CD4-positive, alpha-beta memory T cell (primary cell): ENCODE measurements at regions of chr5 and their contacts with region 1.

Region 1: GRCh38 chr5:141968914-141969608 is at the start of gene RNF14:
- DNase-seq: peak; percentile 92 to 94 (median 93)
- H3K4me3 ChIP-seq: peak within 1 kb of the TSS; percentile 66 to 85
- H3K4me3 Mint-ChIP-seq: peak within 1 kb of the TSS; percentile 87 to 98 (median 94)
- H3K27ac ChIP-seq: peak within 1 kb of the TSS; percentile 96
- H3K27ac Mint-ChIP-seq: peak within 1 kb of the TSS; percentile 97 to 99 (median 98)
- H3K4me1 ChIP-seq: peaks cover 23% of the 10 kb centered on the region
- H3K4me1 Mint-ChIP-seq: peaks cover 20 to 42% (median 30%) of the 10 kb centered on the region in 4 donors
- H3K27me3 ChIP-seq: no peaks in the 10 kb centered on the region
- H3K27me3 Mint-ChIP-seq: no peaks in the 10 kb centered on the region
- total RNA-seq, gene RNF14: 35.4 to 38.5 TPM

Region 2: GRCh38 chr5:141636413-141637122 is 332.5 kb before region 1 on chr5 and contains the starts of genes HDAC3 and RELL2:
- CTCF ChIA-PET with region 1: interaction called, 6 read pairs
- POLR2A ChIA-PET with region 1: interaction called, 12 read pairs
- intact Hi-C with region 1: no loop called
- DNase-seq: peak; percentile 89 to 95 (median 93)
- H3K4me3 ChIP-seq: peak within 1 kb of the TSS; percentile 86 to 98
- H3K4me3 Mint-ChIP-seq: peak within 1 kb of the TSS; percentile 88 to 96 (median 94)
- H3K27ac ChIP-seq: peak within 1 kb of the TSS; percentile 87
- H3K27ac Mint-ChIP-seq: peak within 1 kb of the TSS; percentile 90 to 98 (median 96)
- H3K4me1 ChIP-seq: peaks cover 50% of the 10 kb centered on the region
- H3K4me1 Mint-ChIP-seq: peaks cover 31 to 51% (median 39%) of the 10 kb centered on the region in 4 donors
- H3K27me3 ChIP-seq: no peaks in the 10 kb centered on the region
- H3K27me3 Mint-ChIP-seq: no peaks in the 10 kb centered on the region
- total RNA-seq, gene HDAC3: 85.1 to 91.0 TPM
- total RNA-seq, gene RELL2: 20.4 to 21.3 TPM

Region 3: GRCh38 chr5:141681695-141682641 is 287.1 kb before region 1 on chr5 and contains the start of gene ARAP3:
- CTCF ChIA-PET with region 1: interaction called, 4 read pairs
- POLR2A ChIA-PET with region 1: interaction called, 18 read pairs
- intact Hi-C with region 1: no loop called
- DNase-seq: peak in 2 of 5 donors; percentile 24 to 47
- H3K4me3 ChIP-seq: peak within 1 kb of the TSS in 1 of 2 donors; percentile 17
- H3K4me3 Mint-ChIP-seq: peak within 1 kb of the TSS; percentile 78 to 86 (median 83)
- H3K27ac ChIP-seq: no peak within 1 kb of the TSS
- H3K27ac Mint-ChIP-seq: peak within 1 kb of the TSS; percentile 47 to 91 (median 77)
- H3K4me1 ChIP-seq: peaks cover 33% of the 10 kb centered on the region
- H3K4me1 Mint-ChIP-seq: peaks cover 14 to 36% (median 26%) of the 10 kb centered on the region in 4 donors
- H3K27me3 ChIP-seq: no peaks in the 10 kb centered on the region
- H3K27me3 Mint-ChIP-seq: peaks cover 0 to 2% of the 10 kb centered on the region in 2 donors
- total RNA-seq, gene ARAP3: 14.7 to 16.4 TPM

Region 4: DNA sequence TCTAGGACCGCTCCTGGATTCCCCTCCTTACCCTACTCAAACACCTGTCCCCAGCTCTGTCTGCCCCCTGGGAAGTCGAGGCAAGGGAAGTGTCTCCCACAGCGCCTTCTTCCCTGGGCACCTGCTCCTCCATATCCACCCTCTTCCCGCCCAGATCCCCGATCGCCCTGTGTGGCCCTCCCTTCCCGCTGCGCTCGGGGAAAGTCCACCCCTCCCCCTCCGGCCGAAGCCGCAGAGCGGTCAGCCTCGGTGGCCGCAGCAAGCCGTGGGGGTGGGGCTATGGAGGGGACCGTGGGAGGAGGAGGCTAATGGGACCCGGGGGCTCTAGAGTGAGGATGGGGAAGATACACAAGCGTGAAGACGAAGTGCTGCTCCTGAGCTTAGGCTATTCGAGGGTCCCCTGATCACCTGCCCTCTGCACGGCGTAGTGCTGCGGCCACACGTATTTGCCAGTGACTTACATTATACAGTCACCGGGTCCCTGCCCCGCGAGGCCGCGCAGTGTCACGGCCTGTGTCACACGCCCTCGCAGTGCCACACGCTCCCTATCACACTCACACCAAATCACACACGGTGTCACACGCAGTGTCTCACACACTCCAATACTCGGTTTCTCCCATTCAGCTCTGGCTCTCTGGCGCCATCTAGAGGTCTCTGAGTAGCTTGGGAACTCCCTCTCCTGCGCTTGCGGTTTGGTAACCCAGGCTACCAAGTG is 90.2 kb before region 1 on chr5:
- CTCF ChIA-PET with region 1: interaction called, 10 read pairs
- POLR2A ChIA-PET with region 1: interaction called, 18 read pairs
- intact Hi-C with region 1: no loop called
- DNase-seq: peak; percentile 88 to 93 (median 90)
- H3K4me3 ChIP-seq: peak overlapping the region; percentile 53 to 76
- H3K4me3 Mint-ChIP-seq: peak overlapping the region; percentile 78 to 92 (median 86)
- H3K27ac ChIP-seq: no peak overlapping the region
- H3K27ac Mint-ChIP-seq: peak overlapping the region; percentile 31 to 88 (median 62)
- H3K4me1 ChIP-seq: peaks cover 40% of the 10 kb centered on the region
- H3K4me1 Mint-ChIP-seq: peaks cover 20 to 49% (median 28%) of the 10 kb centered on the region in 4 donors
- H3K27me3 ChIP-seq: peaks cover 60% of the 10 kb centered on the region
- H3K27me3 Mint-ChIP-seq: peaks cover 54 to 63% of the 10 kb centered on the region in 2 donors

Region 5: DNA sequence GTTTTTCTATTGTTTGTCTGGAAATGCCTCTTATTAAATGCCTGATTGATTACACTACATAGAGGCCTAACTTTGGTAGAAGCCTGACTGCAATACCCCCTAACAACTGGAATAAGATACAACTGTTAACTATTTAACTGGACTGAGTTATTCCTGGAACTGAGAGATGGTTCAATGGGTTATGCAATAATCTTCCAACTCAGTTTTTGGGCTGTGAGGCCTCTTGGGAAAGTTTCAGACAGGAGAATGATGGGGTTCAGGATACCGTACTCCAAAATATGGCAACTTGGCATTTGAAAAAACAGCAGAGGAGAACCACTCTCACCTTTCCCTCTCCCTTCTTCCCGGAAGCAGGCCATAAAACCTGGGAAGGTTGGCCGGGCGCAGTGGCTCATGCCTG is 71.6 kb before region 1 on chr5:
- CTCF ChIA-PET with region 1: no interaction called
- POLR2A ChIA-PET with region 1: no interaction called
- intact Hi-C with region 1: no loop called
- DNase-seq: no peak
- H3K4me3 ChIP-seq: no peak overlapping the region
- H3K4me3 Mint-ChIP-seq: no peak overlapping the region
- H3K27ac ChIP-seq: no peak overlapping the region
- H3K27ac Mint-ChIP-seq: no peak overlapping the region
- H3K4me1 ChIP-seq: no peaks in the 10 kb centered on the region
- H3K4me1 Mint-ChIP-seq: no peaks in the 10 kb centered on the region
- H3K27me3 ChIP-seq: no peaks in the 10 kb centered on the region
- H3K27me3 Mint-ChIP-seq: peaks cover 4 to 18% of the 10 kb centered on the region in 2 donors

Region 6: GRCh38 chr5:141992349-141992963 is 23.4 kb after region 1 on chr5:
- CTCF ChIA-PET with region 1: interaction called, 39 read pairs
- POLR2A ChIA-PET with region 1: interaction called, 4 read pairs
- intact Hi-C with region 1: no loop called
- DNase-seq: peak; percentile 67 to 74 (median 70)
- H3K4me3 ChIP-seq: no peak overlapping the region
- H3K4me3 Mint-ChIP-seq: no peak overlapping the region
- H3K27ac ChIP-seq: no peak overlapping the region
- H3K27ac Mint-ChIP-seq: peak overlapping the region in 3 of 7 donors; percentile 9 to 71 (median 60)
- H3K4me1 ChIP-seq: no peaks in the 10 kb centered on the region
- H3K4me1 Mint-ChIP-seq: peaks cover 3 to 7% (median 4%) of the 10 kb centered on the region in 4 donors
- H3K27me3 ChIP-seq: no peaks in the 10 kb centered on the region
- H3K27me3 Mint-ChIP-seq: no peaks in the 10 kb centered on the region

Region 7: DNA sequence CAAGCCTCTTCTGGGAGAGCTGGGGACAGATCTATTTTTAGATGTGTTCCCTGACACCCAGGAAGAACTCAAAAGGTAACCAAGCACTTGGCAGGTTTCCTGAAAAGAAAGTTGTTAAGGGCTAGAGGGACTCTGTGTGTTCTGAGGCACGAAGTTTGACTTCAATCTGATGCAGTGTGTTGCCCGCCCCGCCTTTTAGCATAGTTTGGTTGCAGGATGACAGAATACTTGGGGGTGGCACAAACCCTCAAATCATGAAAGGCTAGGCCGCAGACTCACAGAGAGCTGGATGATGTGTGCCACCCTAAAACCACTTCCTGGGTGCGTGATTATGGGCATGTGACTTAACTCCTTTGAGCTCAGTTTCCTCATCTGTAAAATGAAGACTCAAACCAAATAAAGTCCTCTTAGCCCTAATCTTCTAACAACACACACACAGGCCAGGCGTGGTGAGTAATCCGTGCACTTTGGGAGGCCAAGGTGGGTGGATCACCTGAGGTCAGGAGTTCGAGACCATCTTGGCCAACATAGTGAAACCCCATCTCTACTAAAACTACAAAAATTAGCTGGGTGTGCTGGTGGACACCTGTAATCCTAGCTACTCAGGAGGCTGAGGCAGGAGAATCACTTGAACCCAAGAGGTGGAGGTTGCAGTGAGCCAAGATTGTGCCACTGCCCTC is 126.7 kb after region 1 on chr5:
- CTCF ChIA-PET with region 1: interaction called, 6 read pairs
- POLR2A ChIA-PET with region 1: interaction called, 16 read pairs
- intact Hi-C with region 1: no loop called
- DNase-seq: peak; percentile 85 to 93 (median 91)
- H3K4me3 ChIP-seq: peak overlapping the region in 1 of 2 donors; percentile 27
- H3K4me3 Mint-ChIP-seq: peak overlapping the region; percentile 37 to 73 (median 57)
- H3K27ac ChIP-seq: peak overlapping the region; percentile 84
- H3K27ac Mint-ChIP-seq: peak overlapping the region; percentile 92 to 98 (median 96)
- H3K4me1 ChIP-seq: peaks cover 48% of the 10 kb centered on the region
- H3K4me1 Mint-ChIP-seq: peaks cover 31 to 51% (median 36%) of the 10 kb centered on the region in 4 donors
- H3K27me3 ChIP-seq: no peaks in the 10 kb centered on the region
- H3K27me3 Mint-ChIP-seq: no peaks in the 10 kb centered on the region

Region 8: GRCh38 chr5:142201471-142201887 is 232.4 kb after region 1 on chr5:
- CTCF ChIA-PET with region 1: no interaction called
- POLR2A ChIA-PET with region 1: no interaction called
- intact Hi-C with region 1: no loop called
- DNase-seq: no peak
- H3K4me3 ChIP-seq: no peak overlapping the region
- H3K4me3 Mint-ChIP-seq: no peak overlapping the region
- H3K27ac ChIP-seq: no peak overlapping the region
- H3K27ac Mint-ChIP-seq: no peak overlapping the region
- H3K4me1 ChIP-seq: no peaks in the 10 kb centered on the region
- H3K4me1 Mint-ChIP-seq: no peaks in the 10 kb centered on the region
- H3K27me3 ChIP-seq: no peaks in the 10 kb centered on the region
- H3K27me3 Mint-ChIP-seq: peaks cover 0 to 1% of the 10 kb centered on the region in 2 donors

Region 9: DNA sequence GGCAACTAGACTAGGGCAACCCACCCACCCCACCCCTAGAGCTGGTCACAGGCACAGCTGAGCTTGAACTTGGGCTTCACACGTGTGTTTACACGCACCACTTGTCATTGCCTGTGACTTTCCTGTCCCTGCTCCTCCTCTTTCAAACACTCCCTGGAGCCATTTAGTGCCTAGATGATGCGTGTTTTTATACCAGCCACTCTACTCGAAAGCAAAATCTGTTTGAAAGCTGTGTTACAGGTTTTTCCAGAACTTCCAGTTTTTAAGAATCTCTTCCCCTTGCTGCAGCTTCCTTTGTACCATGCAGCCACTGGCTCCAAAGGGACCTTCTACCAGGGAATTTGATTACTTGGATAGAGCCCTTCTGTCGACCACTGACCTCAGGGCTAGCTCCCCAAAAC is 434.5 kb after region 1 on chr5:
- CTCF ChIA-PET with region 1: no interaction called
- POLR2A ChIA-PET with region 1: no interaction called
- intact Hi-C with region 1: no loop called
- DNase-seq: no peak
- H3K4me3 ChIP-seq: no peak overlapping the region
- H3K4me3 Mint-ChIP-seq: no peak overlapping the region
- H3K27ac ChIP-seq: no peak overlapping the region
- H3K27ac Mint-ChIP-seq: no peak overlapping the region
- H3K4me1 ChIP-seq: no peaks in the 10 kb centered on the region
- H3K4me1 Mint-ChIP-seq: peaks cover 0 to 8% (median 2%) of the 10 kb centered on the region in 4 donors
- H3K27me3 ChIP-seq: no peaks in the 10 kb centered on the region
- H3K27me3 Mint-ChIP-seq: no peaks in the 10 kb centered on the region

Region 10: DNA sequence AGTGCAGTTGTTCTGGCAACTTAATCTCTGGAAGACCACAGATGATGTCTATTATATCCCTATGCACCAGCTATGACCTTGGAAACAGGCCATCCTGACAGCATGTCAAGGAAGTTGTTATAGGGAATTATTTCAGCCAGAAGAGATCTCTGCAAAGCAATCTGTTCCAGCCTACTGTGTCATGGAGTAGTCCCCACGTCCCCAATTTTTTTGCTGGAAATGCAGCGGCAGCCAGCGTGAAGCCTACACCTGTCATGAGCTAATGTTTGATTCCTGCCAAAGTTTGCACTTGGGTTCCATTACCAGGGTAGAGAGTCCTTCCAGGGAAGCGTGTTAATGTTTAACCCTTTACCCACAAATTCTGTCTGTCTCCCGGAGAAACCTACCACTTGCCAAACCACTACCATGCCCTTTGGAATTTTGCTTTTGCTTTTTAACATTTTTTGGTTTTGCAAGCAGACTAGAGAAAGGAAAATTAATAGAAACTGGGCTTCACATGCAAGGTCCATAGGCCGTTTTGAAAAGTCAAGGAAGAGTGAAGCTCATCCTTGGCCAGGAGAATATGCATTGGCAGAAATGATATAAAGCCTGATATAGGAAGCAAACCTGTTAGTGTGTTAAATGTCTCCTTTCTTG is 530.6 kb after region 1 on chr5:
- CTCF ChIA-PET with region 1: no interaction called
- POLR2A ChIA-PET with region 1: no interaction called
- intact Hi-C with region 1: no loop called
- DNase-seq: no peak
- H3K4me3 ChIP-seq: no peak overlapping the region
- H3K4me3 Mint-ChIP-seq: no peak overlapping the region
- H3K27ac ChIP-seq: no peak overlapping the region
- H3K27ac Mint-ChIP-seq: no peak overlapping the region
- H3K4me1 ChIP-seq: no peaks in the 10 kb centered on the region
- H3K4me1 Mint-ChIP-seq: peaks cover 0 to 5% (median 0%) of the 10 kb centered on the region in 4 donors
- H3K27me3 ChIP-seq: no peaks in the 10 kb centered on the region
- H3K27me3 Mint-ChIP-seq: no peaks in the 10 kb centered on the region